PC-9 (cell line): ENCODE measurements at regions of chr12 and their contacts with region 1.

Region 1: GRCh38 chr12:132003846-132004245 is 54.1 kb downstream of the EP400 start:
- DNase-seq: no peak
- H3K4me3 ChIP-seq: no peak overlapping the region
- H3K27ac ChIP-seq: no peak overlapping the region
- H3K4me1 ChIP-seq: no peaks in the 10 kb centered on the region
- H3K27me3 ChIP-seq: no peaks in the 10 kb centered on the region
- CTCF ChIP-seq: no peak

Region 2: DNA sequence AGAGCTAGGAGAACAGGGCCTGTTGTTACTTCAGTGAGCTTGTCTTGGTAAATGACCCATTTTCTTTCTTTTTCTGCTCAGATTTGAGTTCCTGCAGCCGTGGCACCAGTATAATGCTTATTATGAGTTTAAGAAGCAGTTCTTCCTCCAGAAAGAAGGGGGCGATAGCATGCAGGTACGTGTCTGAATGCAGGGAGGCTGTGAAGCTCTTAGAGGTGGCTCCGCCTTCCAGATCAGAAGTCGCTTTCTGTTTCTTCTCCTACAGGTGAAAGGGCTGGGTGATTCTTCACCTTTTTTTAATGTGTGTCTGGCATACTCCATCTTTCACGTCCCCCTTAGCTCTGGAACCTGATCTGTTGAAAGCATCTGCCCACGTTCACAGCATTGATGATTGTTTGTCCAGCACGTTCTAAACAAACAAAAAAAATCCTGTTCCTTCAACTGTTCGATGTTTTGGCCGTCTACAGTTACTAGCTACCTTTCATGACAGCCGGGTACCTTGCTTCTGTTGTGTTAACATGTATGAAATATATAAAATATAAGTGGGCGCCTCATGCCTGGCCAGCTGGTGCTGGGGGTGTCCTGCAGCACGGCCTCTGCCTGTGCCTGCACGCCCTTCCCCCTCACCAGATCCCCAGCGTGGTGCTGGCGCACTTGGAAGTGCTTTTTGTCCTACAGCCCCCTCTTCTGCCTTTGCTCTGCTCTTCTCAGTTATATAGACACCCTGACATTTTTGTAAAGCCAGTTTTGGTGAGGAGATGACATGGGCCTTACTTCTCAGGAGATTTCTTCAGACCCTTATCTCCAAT is 248.3 kb before region 1 on chr12:
- CTCF ChIA-PET with region 1: no interaction called
- POLR2A ChIA-PET with region 1: no interaction called
- intact Hi-C with region 1: loop called (anchors 10 kb)
- DNase-seq: peak; percentile 6 to 60
- H3K4me3 ChIP-seq: no peak overlapping the region
- H3K27ac ChIP-seq: no peak overlapping the region
- H3K4me1 ChIP-seq: no peaks in the 10 kb centered on the region
- H3K27me3 ChIP-seq: no peaks in the 10 kb centered on the region
- CTCF ChIP-seq: peak; percentile 58

Region 3: GRCh38 chr12:131836193-131836592 is 167.7 kb before region 1 on chr12:
- CTCF ChIA-PET with region 1: interaction called, 7 read pairs
- POLR2A ChIA-PET with region 1: no interaction called
- intact Hi-C with region 1: loop called (anchors 5 kb)
- DNase-seq: no peak
- H3K4me3 ChIP-seq: no peak overlapping the region
- H3K27ac ChIP-seq: no peak overlapping the region
- H3K4me1 ChIP-seq: peaks cover 17% of the 10 kb centered on the region; the same call in 1 of the 2 replicates
- H3K27me3 ChIP-seq: no peaks in the 10 kb centered on the region
- CTCF ChIP-seq: peak; percentile 56; the same call in 1 of the 2 replicates

Region 4: DNA sequence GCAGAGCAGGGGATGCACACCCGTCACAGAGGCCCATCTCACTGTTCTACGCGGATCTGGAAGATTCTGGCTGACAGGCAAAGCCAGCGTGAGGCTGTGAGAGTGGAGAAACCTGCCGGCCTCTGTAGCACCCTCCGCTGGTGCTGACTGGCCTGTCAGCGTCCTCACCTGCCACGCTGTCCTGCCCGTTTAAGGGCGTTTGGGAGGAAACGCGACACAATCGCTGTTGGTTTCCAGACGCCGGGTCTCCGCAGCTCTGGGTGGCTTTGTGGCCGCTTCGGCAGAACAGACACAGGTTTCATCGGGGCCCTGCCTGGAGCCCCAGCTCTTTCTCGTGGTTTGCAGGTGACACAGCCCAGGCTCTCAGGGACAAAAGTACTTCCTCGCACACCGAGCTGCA is 211.0 kb after region 1 on chr12:
- CTCF ChIA-PET with region 1: no interaction called
- POLR2A ChIA-PET with region 1: no interaction called
- intact Hi-C with region 1: no loop called
- DNase-seq: no peak
- H3K4me3 ChIP-seq: no peak overlapping the region
- H3K27ac ChIP-seq: no peak overlapping the region
- H3K4me1 ChIP-seq: no peaks in the 10 kb centered on the region
- H3K27me3 ChIP-seq: peaks cover 77% of the 10 kb centered on the region
- CTCF ChIP-seq: no peak